K562 (cell line): ENCODE measurements at regions of chr15 and their contacts with region 1.

Region 1: DNA sequence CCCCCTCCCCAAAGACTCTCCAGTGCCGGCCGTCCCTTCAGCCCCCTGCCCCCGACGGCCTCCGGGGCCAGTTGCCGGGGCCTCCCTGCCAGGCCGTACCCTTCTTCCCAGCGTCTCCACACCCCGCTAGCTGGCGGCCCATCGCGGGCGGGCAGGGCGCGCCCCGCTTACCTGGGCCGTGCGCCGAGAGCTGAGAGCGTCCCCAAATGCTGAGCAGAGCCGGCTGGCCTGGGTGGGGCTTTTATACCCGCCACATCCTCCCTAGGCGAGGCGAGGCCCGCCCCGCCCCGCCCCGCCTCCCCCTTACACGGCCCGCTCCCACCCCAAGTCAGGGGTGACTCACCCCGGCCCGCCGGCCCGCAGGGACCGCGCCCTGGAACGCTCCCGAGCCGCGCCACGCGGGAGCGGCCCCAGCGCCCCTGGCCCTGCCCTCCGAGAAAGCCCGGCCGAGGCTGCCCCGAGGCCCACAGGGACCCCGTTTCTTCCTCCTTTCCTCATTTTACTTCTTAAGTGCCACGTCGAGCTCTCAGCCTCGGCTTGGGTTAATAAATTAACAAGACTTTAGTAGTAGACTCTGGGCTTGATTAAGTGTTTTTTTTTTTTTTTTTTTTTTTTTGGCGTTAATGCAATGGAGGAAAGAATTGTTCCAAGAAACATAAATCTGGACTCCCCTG is at the start of gene ANXA2:
- DNase-seq: peak; percentile 93 to 97 (median 94)
- ATAC-seq: peak; percentile 88
- H3K4me3 ChIP-seq: peak within 1 kb of the TSS; percentile 95
- H3K27ac ChIP-seq: peak within 1 kb of the TSS; percentile 96
- H3K4me1 ChIP-seq: peaks cover 35 to 36% of the 10 kb centered on the region in 2 experiments
- H3K27me3 ChIP-seq: no peaks in the 10 kb centered on the region
- CTCF ChIP-seq: no peak
- EP300 ChIP-seq: no peak
- POLR2A ChIP-seq: peak; percentile 89
- RAD21 ChIP-seq: no peak
- polyA plus RNA-seq, gene ANXA2: 826 to 1,102 TPM

Region 2: DNA sequence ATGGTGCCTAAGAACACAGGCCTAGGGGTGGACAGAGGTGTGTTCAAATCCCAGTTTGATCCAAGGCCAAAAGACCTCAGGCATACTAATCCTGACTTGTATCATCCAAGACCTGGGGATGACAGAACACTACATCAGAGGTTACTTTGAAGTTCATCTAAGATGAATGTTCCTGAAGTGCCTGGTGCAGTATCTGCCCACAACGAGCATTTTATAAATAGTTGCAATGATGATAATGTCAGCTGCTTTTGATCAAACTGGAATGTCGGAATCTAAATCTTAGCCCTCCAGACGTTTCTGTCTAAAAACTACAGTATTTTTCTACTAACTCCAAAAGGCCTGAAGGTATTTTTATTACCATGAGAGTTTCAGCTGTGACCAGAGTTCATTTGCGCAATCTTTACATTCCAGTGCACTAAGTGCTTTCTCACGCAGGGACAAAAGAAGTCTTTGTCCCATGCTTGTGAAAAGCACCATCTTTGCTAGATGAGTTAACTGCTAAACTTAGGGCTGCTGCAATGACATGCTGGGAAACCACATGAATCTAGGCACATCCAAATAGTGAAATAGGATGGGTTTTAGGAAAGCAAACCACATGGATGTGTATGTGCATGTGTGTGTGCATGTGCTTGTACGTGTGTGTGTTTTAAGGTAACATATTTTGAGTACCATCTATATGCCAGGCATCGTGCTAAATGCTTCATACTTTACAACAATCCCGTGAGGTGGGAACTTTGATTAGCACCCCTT is 18.2 kb before region 1 on chr15:
- CTCF ChIA-PET with region 1: no interaction called
- POLR2A ChIA-PET with region 1: interaction called, 38 read pairs
- in situ Hi-C with region 1: no loop called
- intact Hi-C with region 1: no loop called
- DNase-seq: no peak
- ATAC-seq: no peak
- H3K4me3 ChIP-seq: no peak overlapping the region
- H3K27ac ChIP-seq: no peak overlapping the region
- H3K4me1 ChIP-seq: no peaks in the 10 kb centered on the region; a peak in 1 of 5 replicates
- H3K27me3 ChIP-seq: no peaks in the 10 kb centered on the region
- CTCF ChIP-seq: no peak
- EP300 ChIP-seq: no peak
- POLR2A ChIP-seq: no peak
- RAD21 ChIP-seq: no peak

Region 3: GRCh38 chr15:60478566-60479360 is 80.9 kb after region 1 on chr15 and contains the start of gene ICE2:
- CTCF ChIA-PET with region 1: no interaction called
- POLR2A ChIA-PET with region 1: interaction called, 8 read pairs
- in situ Hi-C with region 1: no loop called
- intact Hi-C with region 1: loop called (anchors 2 kb)
- DNase-seq: peak; percentile 90 to 97 (median 90)
- ATAC-seq: peak; percentile 92
- H3K4me3 ChIP-seq: peak within 1 kb of the TSS; percentile 80
- H3K27ac ChIP-seq: peak within 1 kb of the TSS; percentile 95
- H3K4me1 ChIP-seq: peaks cover 0 to 11% of the 10 kb centered on the region in 2 experiments; a peak in 2 of 5 replicates
- H3K27me3 ChIP-seq: no peaks in the 10 kb centered on the region
- CTCF ChIP-seq: peak in 1 of 3 experiments; percentile 12; a peak in 2 of 6 replicates
- EP300 ChIP-seq: peak; percentile 48
- POLR2A ChIP-seq: peak; percentile 97
- RAD21 ChIP-seq: no peak
- polyA plus RNA-seq, gene ICE2: 21.8 to 31.7 TPM